Colonic mucosa (tissue), 4 donors: ENCODE measurements at regions of chr1 and their contacts with region 1.

Region 1: GRCh38 chr1:37434292-37434907 is 40.0 kb upstream of the ZC3H12A start:
- DNase-seq: peak; percentile 64
- H3K4me3 ChIP-seq: no peak overlapping the region
- H3K27ac ChIP-seq: no peak overlapping the region
- H3K4me1 ChIP-seq: no peaks in the 10 kb centered on the region
- H3K27me3 ChIP-seq: no peaks in the 10 kb centered on the region
- CTCF ChIP-seq: peak; percentile 93

Region 2: GRCh38 chr1:36576118-36576517 is 858.3 kb before region 1 on chr1:
- intact Hi-C with region 1: loop called (anchors 10 kb)
- DNase-seq: peak; percentile 26
- H3K4me3 ChIP-seq: no peak overlapping the region
- H3K27ac ChIP-seq: no peak overlapping the region
- H3K4me1 ChIP-seq: no peaks in the 10 kb centered on the region
- H3K27me3 ChIP-seq: no peaks in the 10 kb centered on the region
- CTCF ChIP-seq: peak; percentile 71

Region 3: DNA sequence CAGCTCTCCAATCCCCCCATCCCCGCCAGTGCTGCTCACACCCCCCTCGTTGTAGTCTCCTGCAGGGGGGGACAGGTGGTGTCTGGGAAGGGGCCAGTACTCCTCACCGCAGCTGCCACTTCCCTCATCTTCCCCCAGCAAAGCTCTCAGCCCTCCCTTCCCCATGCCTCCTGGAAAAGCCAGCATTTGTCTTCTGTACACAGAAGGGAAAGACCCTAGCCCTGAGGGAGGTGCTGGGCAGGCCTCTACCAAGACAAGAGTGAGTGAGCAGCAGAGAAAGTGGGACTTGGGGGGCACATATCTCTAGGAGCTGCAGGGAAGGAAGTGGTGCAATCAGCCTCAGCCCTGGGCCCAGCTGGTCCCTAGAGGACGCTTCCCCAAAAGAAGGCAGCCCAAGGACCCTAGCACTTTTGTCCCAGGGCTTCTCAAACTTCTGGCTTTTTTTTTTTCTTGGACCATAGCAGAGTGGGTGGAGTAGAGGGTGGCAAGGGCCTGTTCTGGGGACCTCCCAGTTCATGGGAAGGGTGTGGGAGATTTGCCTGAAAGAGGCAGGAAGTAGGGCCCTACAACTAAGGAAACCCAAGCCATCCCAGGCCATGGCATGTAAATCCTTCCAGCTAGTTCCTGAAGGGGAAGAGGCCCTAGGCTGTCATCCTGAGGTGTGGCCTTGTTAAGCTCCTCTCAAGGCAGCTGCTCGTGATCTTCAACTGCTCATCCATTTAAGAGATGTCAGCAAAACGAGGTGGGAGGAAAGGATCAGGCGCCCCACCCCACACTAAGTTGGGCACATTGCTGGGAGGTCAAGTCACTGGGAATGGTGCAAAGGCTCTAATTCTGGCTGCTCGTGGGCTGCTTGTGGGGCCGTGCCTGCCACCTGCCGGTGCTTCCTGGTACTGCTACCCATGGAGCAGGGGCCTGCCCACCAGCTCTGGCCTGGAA is 52.5 kb after region 1 on chr1:
- intact Hi-C with region 1: no loop called
- DNase-seq: peak; percentile 87
- H3K4me3 ChIP-seq: no peak overlapping the region
- H3K27ac ChIP-seq: peak overlapping the region; percentile 82
- H3K4me1 ChIP-seq: peaks cover 20% of the 10 kb centered on the region
- H3K27me3 ChIP-seq: no peaks in the 10 kb centered on the region
- CTCF ChIP-seq: peak; percentile 99

Region 4: GRCh38 chr1:37655274-37655673 is 220.9 kb after region 1 on chr1:
- intact Hi-C with region 1: no loop called
- DNase-seq: no peak
- H3K4me3 ChIP-seq: no peak overlapping the region
- H3K27ac ChIP-seq: no peak overlapping the region
- H3K4me1 ChIP-seq: no peaks in the 10 kb centered on the region
- H3K27me3 ChIP-seq: no peaks in the 10 kb centered on the region
- CTCF ChIP-seq: no peak